ENCODE measurements at regions of chr11 and their contacts with region 1.

Region 1: DNA sequence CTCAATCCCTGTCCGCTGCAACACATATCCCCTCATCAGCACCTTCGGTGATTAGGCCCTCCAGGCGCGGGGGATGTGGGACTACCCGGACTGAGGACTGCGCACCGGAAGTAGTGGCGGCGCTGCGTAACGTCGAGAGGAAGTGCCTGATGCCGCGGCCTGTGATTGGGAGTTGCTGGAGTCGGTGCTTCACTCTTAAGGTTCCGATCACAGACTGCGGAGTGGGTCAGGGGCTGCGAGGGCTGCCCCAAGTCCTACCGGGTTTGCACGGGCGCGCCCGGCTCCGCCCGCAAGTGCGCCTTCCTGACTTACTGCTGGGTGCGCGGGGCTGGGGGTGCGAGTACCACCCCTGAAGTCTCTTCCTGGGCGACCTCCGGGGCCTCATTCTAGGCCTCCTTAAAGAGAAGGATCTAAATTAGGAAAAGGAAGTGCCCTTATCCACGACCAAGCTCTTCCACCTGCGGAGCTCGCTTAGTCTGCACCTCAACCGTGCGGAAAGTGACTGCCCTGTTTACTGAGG is at the start of gene ALKBH3:
- DNase-seq: peak; percentile 83 to 87
- H3K4me3 ChIP-seq: peak within 1 kb of the TSS; percentile 57 to 72 (median 70)
- H3K27ac ChIP-seq: no peak within 1 kb of the TSS
- H3K4me1 ChIP-seq: no peaks in the 10 kb centered on the region
- H3K27me3 ChIP-seq: peaks cover 0 to 7% (median 3%) of the 10 kb centered on the region in 4 experiments; a peak in 2 of 7 replicates
- CTCF ChIP-seq: no peak
- EP300 ChIP-seq: no peak
- POLR2A ChIP-seq: peak in 1 of 2 experiments; percentile 19; a peak in 1 of 3 replicates
- RAD21 ChIP-seq: no peak
- total RNA-seq, gene ALKBH3: 11.4 and 12.7 TPM in 2 replicates

Region 2: GRCh38 chr11:44036811-44037657 is 156.3 kb after region 1 on chr11:
- CTCF ChIA-PET with region 1: interaction called, 10 read pairs
- POLR2A ChIA-PET with region 1: no interaction called
- DNase-seq: peak; percentile 61 to 80
- H3K4me3 ChIP-seq: no peak overlapping the region
- H3K27ac ChIP-seq: no peak overlapping the region
- H3K4me1 ChIP-seq: peaks cover 0 to 2% (median 0%) of the 10 kb centered on the region in 4 experiments; a peak in 3 of 7 replicates
- H3K27me3 ChIP-seq: no peaks in the 10 kb centered on the region
- CTCF ChIP-seq: peak; percentile 75 to 96 (median 91)
- EP300 ChIP-seq: no peak
- POLR2A ChIP-seq: no peak
- RAD21 ChIP-seq: peak; percentile 97 to 98

Region 3: DNA sequence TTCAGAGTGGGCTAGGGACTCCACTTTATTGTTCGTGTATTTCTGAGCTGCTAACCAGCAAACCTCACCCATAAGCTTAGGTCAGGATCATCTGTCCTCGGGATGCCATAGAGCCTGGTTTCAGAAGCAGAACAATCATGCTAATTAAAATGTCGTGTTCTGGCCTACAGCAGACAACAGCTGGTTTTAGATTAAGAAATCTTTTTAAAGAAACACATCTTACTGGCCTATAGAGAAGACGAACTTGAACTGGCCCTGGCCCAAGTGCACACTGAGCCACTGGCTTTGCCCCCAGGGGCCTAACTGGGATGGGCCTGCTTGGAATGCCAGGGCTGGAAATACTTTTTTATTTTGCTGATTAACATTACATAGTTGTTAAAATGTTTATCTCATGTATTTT is 366.0 kb after region 1 on chr11:
- CTCF ChIA-PET with region 1: no interaction called
- POLR2A ChIA-PET with region 1: no interaction called
- DNase-seq: no peak
- H3K4me3 ChIP-seq: no peak overlapping the region
- H3K27ac ChIP-seq: no peak overlapping the region
- H3K4me1 ChIP-seq: peaks cover 11 to 23% (median 16%) of the 10 kb centered on the region in 4 experiments
- H3K27me3 ChIP-seq: no peaks in the 10 kb centered on the region
- CTCF ChIP-seq: no peak
- EP300 ChIP-seq: no peak
- POLR2A ChIP-seq: no peak
- RAD21 ChIP-seq: no peak

Measured in H1 (cell line).